ENCODE measurements at regions of chr9 and their contacts with region 1.

Region 1: DNA sequence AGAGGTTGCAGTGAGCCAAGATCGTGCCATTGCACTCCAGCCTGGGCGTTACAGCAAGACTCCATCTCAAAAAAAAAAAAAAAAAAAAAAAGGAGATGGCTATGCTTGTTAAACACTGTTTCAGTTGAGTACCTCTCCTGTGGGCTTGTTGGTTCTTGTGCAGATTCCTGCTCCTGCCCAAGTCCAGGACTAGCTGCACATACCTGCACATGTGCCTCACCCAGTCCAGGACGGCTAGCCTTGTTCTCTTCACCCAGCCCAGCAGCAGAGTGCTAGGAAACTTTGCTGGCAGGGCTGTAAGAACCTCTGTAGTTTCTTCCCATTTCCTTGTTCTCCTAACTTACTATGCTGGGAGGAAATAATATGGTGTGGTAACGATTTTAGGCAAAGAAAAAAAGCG is 234.1 kb upstream of the DMRT1 start:
- DNase-seq: no peak
- ATAC-seq: peak in 1 of 4 donors; percentile 28
- H3K4me3 ChIP-seq: no peak overlapping the region
- H3K27ac ChIP-seq: no peak overlapping the region
- H3K4me1 ChIP-seq: peaks cover 0 to 27% (median 0%) of the 10 kb centered on the region in 12 donors
- H3K27me3 ChIP-seq: no peaks in the 10 kb centered on the region
- CTCF ChIP-seq: no peak
- POLR2A ChIP-seq: no peak

Region 2: GRCh38 chr9:551986-552929 is 55.2 kb before region 1 on chr9:
- intact Hi-C with region 1: loop called in 1 of 10 experiments (anchors 10 kb)
- DNase-seq: no peak
- ATAC-seq: peak in 1 of 4 donors; percentile 43
- H3K4me3 ChIP-seq: no peak overlapping the region
- H3K27ac ChIP-seq: peak overlapping the region in 6 of 12 donors; percentile 27 to 53 (median 36)
- H3K4me1 ChIP-seq: peaks cover 2 to 45% (median 16%) of the 10 kb centered on the region in 12 donors
- H3K27me3 ChIP-seq: no peaks in the 10 kb centered on the region
- CTCF ChIP-seq: no peak
- POLR2A ChIP-seq: no peak

Region 3: DNA sequence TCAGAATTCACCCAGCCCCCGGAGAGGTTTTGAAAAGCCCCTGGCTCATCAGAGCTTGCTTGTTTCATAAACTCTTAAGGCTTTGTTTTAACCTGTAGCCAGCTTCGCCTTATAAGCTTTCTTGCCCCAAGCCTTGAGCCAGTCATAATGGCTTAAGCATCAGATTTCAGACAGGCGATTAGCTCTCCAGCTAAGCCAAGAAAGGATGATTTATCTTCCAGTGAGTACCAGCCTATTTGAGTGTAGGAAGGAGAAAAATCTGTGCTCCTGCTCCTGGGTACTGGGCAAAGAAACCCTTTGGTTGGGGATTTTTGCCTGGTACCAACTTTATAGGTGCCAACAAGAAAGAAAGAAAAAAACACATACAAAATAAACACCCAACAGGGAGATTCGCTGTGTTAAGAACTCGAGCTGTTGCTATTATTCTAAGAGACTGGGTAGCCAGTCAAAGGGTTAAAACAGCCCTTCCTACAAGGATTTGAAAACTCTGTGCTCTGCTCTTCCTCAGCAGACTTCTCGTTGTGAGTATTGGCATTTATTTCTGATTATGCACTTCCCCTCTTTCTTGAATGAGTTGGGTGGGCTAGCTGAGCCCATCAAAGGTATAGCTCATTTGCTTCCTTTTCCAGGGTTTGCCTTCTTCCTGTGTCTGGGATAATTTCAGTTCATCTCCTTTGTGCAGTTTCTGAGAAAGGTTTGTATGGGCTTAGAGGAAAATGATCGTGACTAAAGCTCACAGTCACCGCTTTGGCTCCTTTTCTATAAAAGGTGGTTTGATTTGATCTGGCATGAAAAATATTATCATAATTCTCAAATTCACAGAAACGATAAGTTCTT is 76.9 kb after region 1 on chr9:
- intact Hi-C with region 1: no loop called
- DNase-seq: no peak
- ATAC-seq: no peak
- H3K4me3 ChIP-seq: peak overlapping the region in 1 of 12 donors; percentile 20
- H3K27ac ChIP-seq: peak overlapping the region in 11 of 12 donors; percentile 7 to 92 (median 41)
- H3K4me1 ChIP-seq: peaks cover 0 to 56% (median 40%) of the 10 kb centered on the region in 12 donors
- H3K27me3 ChIP-seq: no peaks in the 10 kb centered on the region
- CTCF ChIP-seq: no peak
- POLR2A ChIP-seq: no peak

Region 4: DNA sequence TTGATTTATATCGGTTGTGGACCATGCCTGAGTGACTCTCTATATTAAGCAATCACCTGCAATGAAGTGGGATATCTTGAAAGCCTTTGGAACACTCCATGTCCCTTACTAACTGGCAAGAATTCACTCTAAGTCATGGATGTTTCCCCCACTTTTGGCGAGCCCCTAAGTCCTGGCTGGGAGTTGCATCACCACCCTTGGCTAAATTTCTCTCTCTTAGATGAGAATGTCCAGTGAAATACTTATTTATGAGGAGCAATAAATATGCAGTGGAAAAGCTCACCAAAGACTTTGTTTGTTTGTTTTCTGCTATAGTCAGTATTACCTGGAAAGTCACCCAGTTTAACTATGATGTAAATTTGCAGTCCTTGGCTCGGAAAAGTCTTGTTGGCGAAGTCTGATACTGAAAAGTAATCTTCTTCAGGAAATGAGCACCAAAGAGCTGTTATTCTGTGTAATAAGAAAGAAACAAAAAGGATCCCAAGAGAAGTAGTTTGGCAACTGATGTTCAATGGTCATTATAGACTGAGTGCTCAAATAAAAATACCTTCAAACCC is 776.6 kb after region 1 on chr9:
- intact Hi-C with region 1: no loop called
- DNase-seq: no peak
- ATAC-seq: no peak
- H3K4me3 ChIP-seq: no peak overlapping the region
- H3K27ac ChIP-seq: no peak overlapping the region
- H3K4me1 ChIP-seq: no peaks in the 10 kb centered on the region
- H3K27me3 ChIP-seq: no peaks in the 10 kb centered on the region
- CTCF ChIP-seq: no peak
- POLR2A ChIP-seq: no peak